Activated CD8-positive, alpha-beta T cell treated with anti-CD3 and anti-CD28 coated beads for 36 hours (primary cell): ENCODE measurements at regions of chr11 and their contacts with region 1.

Region 1: GRCh38 chr11:74492974-74493790 is at the start of gene LIPT2:
- DNase-seq: peak; percentile 99
- ATAC-seq: peak; percentile 97
- H3K4me3 Mint-ChIP-seq: peak within 1 kb of the TSS; percentile 82
- H3K27ac Mint-ChIP-seq: peak within 1 kb of the TSS; percentile 89
- H3K4me1 Mint-ChIP-seq: peaks cover 16% of the 10 kb centered on the region
- H3K27me3 Mint-ChIP-seq: no peaks in the 10 kb centered on the region
- CTCF ChIP-seq: no peak
- total RNA-seq, gene LIPT2: 5.9 to 6.8 TPM

Region 2: DNA sequence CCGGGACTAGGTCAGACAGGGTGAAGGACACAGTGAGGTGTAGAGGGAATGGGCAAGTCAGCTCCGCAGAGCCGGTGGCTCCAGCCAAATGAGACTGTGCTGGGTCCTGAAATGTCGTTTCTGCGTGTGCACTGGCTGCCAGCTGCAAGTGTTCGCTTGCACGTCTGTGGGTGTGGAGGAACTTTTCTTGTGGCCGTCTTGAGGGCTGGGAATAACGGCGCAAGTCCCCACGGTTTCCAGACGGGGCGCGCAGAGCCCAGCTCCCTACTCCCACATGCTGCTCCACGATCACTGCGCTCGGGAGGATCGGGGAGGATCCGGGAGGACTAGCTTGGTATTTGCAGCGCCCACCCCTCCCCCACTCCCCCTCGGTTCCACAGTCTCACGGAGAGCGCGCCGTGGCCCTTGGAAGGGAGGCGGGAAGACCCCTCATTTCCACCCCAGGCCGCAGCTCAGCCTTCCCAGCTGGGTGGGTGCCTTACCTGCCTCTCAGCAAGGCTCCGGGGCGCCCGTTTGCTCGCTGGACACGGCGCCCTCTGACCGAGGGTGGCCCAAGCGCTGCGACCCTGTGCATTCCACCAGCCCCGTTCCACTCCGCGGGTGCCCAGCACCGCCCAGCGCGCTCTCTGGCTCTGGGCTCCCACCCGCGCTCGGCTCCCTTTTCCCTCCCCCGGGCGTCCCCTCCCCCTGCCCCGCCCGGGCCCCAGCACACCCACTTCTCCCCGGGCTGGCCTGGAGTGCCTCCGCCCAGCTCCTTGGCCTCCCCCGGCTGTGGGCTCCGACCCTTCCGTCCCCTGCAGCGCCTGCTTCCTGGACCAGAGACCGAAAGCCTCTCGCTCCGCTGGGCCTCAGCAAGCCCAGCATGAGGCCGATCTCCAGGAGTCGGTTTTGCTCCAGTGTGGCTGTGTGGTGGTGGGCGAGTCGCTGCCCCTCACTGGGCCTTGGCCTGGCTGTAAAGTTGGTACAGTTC is 26.0 kb before region 1 on chr11 and contains the start of gene KCNE3:
- CTCF ChIA-PET with region 1: no interaction called
- POLR2A ChIA-PET with region 1: no interaction called
- intact Hi-C with region 1: no loop called
- DNase-seq: no peak
- ATAC-seq: no peak
- H3K4me3 Mint-ChIP-seq: no peak within 1 kb of the TSS
- H3K27ac Mint-ChIP-seq: no peak within 1 kb of the TSS
- H3K4me1 Mint-ChIP-seq: peaks cover 7% of the 10 kb centered on the region
- H3K27me3 Mint-ChIP-seq: peaks cover 28% of the 10 kb centered on the region
- CTCF ChIP-seq: no peak
- total RNA-seq, gene KCNE3: not detected

Region 3: GRCh38 chr11:74592441-74593362 is 99.5 kb after region 1 on chr11 and contains the start of gene POLD3:
- CTCF ChIA-PET with region 1: no interaction called
- POLR2A ChIA-PET with region 1: interaction called, 14 read pairs
- intact Hi-C with region 1: no loop called
- DNase-seq: peak; percentile 96
- ATAC-seq: peak; percentile 98
- H3K4me3 Mint-ChIP-seq: peak within 1 kb of the TSS; percentile 100
- H3K27ac Mint-ChIP-seq: peak within 1 kb of the TSS; percentile 98
- H3K4me1 Mint-ChIP-seq: peaks cover 31% of the 10 kb centered on the region
- H3K27me3 Mint-ChIP-seq: no peaks in the 10 kb centered on the region
- CTCF ChIP-seq: no peak
- total RNA-seq, gene POLD3: 56.0 to 67.2 TPM